Common myeloid progenitor, CD34-positive (primary cell): ENCODE measurements at regions of chr4 and their contacts with region 1.

Region 1: DNA sequence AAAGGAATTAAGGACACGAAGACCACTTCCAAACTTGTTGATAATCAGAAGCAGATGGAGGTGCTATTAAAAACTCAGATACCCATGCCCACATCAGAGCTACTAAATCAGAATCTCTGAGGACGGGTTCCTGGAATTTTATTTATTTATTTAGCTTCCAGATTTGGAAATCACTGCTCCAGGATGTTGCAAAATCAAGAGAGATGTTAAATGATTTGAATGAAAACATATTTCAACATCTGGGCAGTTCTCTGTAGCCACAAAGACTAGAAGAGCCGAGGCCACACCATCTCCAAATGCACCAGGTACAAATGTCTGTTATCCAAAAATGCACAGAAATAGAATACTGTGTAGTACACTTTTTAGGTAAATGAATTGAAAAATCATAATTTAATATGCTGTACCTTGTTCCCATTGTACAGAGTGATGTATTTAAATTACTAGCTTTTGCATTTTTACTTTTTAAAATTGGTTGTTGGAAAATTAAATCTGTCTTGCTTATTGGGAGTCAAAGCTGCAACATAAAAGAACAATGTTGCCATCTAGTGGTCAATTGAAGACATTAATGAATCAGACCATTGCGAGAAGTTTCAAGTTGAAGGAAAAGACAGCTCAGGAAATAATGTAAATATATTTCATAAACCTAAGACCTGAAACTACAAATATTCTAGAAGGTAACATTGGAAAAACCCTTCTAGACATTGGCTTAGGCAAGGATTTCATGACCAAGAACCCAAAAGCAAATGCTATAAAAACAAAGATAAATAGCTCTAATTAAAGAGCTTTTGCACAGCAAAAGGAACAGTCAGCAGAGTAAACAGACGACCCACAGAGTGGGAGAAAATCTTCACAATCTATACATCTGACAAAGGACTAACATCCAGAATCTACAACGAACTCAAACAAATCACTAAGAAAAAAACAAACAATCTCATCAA is 151.3 kb upstream of the TTC29 start:
- DNase-seq: peak; percentile 38 to 67 (median 63)
- H3K4me3 ChIP-seq: no peak overlapping the region
- H3K27ac ChIP-seq: no peak overlapping the region
- H3K4me1 ChIP-seq: no peaks in the 10 kb centered on the region
- H3K27me3 ChIP-seq: peaks cover 0 to 2% (median 0%) of the 10 kb centered on the region in 5 experiments

Region 2: DNA sequence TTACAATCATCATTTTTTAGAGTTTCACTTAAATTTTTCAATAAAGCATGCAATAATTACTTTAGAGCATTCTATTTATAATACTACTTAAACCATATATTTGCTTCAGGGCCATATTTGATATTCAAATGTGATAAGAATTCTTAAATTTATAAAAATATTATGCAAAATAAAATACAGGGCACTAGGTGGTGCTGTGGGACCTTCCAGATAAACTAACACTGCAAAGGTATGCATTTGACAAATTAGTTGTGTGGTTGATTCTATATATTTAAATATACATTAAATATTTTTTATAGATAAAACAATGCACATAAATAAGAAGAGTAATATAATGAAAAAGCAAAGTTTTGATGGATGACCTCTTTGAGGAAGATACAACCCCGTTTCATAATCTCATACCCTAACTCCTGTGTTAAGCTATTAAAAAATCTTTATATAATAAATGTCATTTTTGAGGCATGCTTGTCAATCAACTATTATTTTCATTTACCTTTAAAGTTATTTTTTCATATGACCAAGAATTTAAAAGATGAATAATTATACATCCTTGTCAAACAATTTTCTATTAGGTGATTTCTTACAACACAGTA is 754.2 kb before region 1 on chr4:
- CTCF ChIA-PET with region 1: interaction called, 14 read pairs
- POLR2A ChIA-PET with region 1: no interaction called
- DNase-seq: peak; percentile 48 to 75 (median 66)
- H3K4me3 ChIP-seq: no peak overlapping the region
- H3K27ac ChIP-seq: no peak overlapping the region
- H3K4me1 ChIP-seq: no peaks in the 10 kb centered on the region
- H3K27me3 ChIP-seq: no peaks in the 10 kb centered on the region

Region 3: DNA sequence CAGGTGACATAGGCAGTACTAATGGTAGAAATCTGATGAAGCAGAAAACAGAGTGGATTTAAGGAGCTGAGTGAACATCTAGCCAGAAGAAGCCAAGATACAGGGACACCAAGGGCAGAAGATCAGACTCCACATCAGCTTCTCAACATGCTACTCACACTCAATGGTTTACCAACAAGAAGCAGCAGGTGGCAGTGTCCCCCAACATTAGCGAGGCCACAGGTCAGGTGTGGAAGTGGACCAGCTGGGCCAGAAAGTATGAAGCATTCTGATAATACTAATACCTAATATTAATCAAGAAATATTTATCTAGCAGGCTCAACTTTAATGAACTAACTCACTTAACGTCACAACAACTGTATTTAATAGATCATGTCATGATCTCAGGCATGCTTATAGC is 77.9 kb before region 1 on chr4:
- CTCF ChIA-PET with region 1: interaction called, 23 read pairs
- POLR2A ChIA-PET with region 1: no interaction called
- DNase-seq: peak; percentile 25 to 49 (median 41)
- H3K4me3 ChIP-seq: no peak overlapping the region
- H3K27ac ChIP-seq: no peak overlapping the region
- H3K4me1 ChIP-seq: peaks cover 0 to 2% (median 0%) of the 10 kb centered on the region in 4 experiments
- H3K27me3 ChIP-seq: peaks cover 0 to 5% (median 2%) of the 10 kb centered on the region in 5 experiments